ENCODE measurements at regions of chr17 and their contacts with region 1.

Region 1: GRCh38 chr17:74961657-74962490 is 10.7 kb downstream of the HID1 start:
- DNase-seq: peak; percentile 90
- H3K4me3 Mint-ChIP-seq: no peak overlapping the region
- H3K27ac Mint-ChIP-seq: no peak overlapping the region
- H3K4me1 Mint-ChIP-seq: peaks cover 9% of the 10 kb centered on the region
- H3K27me3 Mint-ChIP-seq: no peaks in the 10 kb centered on the region

Region 2: DNA sequence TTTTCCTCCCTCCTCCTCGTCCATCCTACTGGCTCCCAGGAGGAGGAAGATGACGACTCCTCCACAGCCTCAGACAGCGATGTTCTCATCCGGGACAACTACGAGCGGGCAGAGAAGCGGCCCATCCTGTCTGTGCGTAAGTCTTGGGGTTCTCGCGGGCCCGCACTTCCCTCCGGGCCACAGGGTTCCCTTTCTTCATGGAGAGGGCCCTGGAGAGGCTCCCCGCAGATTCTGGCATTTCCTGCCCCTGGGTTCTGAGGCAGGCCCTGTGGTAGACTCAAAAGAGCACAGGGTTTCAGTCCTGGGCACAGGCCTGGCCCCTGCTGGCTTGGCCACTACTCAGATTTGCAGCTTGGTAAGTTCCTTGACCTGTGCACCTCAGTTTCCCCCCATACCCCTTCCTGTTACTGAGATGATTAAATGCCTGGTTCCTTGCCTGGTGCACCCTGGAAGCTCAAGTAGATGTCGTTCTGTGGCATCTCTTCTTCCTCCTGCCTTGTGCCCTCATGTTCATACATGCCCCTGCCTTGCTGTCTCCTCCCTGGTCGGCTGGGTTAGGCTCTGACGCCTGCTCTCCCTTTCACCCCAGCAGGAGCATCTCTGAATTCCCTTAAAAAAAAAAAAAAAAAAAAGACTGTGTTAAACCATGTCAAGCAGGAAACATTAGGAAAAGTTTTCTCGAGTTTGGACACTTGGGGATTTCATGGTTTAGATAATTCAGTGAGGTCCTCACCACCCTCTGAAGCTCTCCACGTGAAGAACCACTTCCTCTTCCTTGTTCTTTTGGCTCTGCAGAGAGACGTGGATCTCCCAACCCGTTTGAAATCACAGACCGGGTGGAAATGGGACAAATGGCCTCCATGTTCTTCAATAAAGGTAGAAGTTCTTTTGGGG is 171.5 kb before region 1 on chr17:
- CTCF ChIA-PET with region 1: interaction called, 16 read pairs
- POLR2A ChIA-PET with region 1: no interaction called
- intact Hi-C with region 1: loop called (anchors 5 kb)
- DNase-seq: no peak
- H3K4me3 Mint-ChIP-seq: no peak overlapping the region
- H3K27ac Mint-ChIP-seq: peak overlapping the region; percentile 57
- H3K4me1 Mint-ChIP-seq: peaks cover 31% of the 10 kb centered on the region
- H3K27me3 Mint-ChIP-seq: no peaks in the 10 kb centered on the region

Region 3: GRCh38 chr17:74815550-74816370 is 146.1 kb before region 1 on chr17:
- CTCF ChIA-PET with region 1: no interaction called
- POLR2A ChIA-PET with region 1: no interaction called
- intact Hi-C with region 1: no loop called
- DNase-seq: no peak
- H3K4me3 Mint-ChIP-seq: no peak overlapping the region
- H3K27ac Mint-ChIP-seq: no peak overlapping the region
- H3K4me1 Mint-ChIP-seq: no peaks in the 10 kb centered on the region
- H3K27me3 Mint-ChIP-seq: no peaks in the 10 kb centered on the region

Region 4: DNA sequence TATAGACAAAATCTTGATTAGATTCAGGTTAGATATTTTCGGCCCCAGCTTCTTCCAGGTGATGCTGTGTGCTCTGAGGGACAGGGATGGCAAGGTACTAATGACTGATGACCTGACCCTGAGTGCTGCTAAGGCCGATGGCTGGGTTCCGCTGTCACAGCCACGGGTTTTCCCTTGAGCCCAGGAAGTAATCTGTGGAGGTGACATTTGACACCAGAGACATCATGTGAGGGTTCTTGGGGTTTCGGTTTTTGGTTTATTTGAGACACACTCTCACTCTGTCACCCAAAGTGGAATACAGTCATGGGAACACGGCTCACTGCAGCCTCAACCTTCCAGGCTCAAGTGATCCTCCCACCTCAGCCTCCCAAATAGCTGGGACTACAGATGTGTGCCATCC is 16.3 kb before region 1 on chr17:
- CTCF ChIA-PET with region 1: interaction called, 14 read pairs
- POLR2A ChIA-PET with region 1: no interaction called
- intact Hi-C with region 1: no loop called
- DNase-seq: no peak
- H3K4me3 Mint-ChIP-seq: no peak overlapping the region
- H3K27ac Mint-ChIP-seq: no peak overlapping the region
- H3K4me1 Mint-ChIP-seq: no peaks in the 10 kb centered on the region
- H3K27me3 Mint-ChIP-seq: peaks cover 8% of the 10 kb centered on the region

Region 5: GRCh38 chr17:74981979-74982662 is 20.2 kb after region 1 on chr17:
- CTCF ChIA-PET with region 1: interaction called, 39 read pairs
- POLR2A ChIA-PET with region 1: interaction called, 4 read pairs
- intact Hi-C with region 1: no loop called
- DNase-seq: peak; percentile 87
- H3K4me3 Mint-ChIP-seq: peak overlapping the region; percentile 77
- H3K27ac Mint-ChIP-seq: peak overlapping the region; percentile 61
- H3K4me1 Mint-ChIP-seq: peaks cover 14% of the 10 kb centered on the region
- H3K27me3 Mint-ChIP-seq: peaks cover 1% of the 10 kb centered on the region

Region 6: GRCh38 chr17:75012346-75013091 is 50.6 kb after region 1 on chr17 and contains the start of gene MRPL58:
- CTCF ChIA-PET with region 1: interaction called, 86 read pairs
- POLR2A ChIA-PET with region 1: interaction called, 3 read pairs
- intact Hi-C with region 1: loop called (anchors 5 kb)
- DNase-seq: peak; percentile 90
- H3K4me3 Mint-ChIP-seq: peak within 1 kb of the TSS; percentile 98
- H3K27ac Mint-ChIP-seq: peak within 1 kb of the TSS; percentile 82
- H3K4me1 Mint-ChIP-seq: peaks cover 31% of the 10 kb centered on the region
- H3K27me3 Mint-ChIP-seq: no peaks in the 10 kb centered on the region
- total RNA-seq, gene MRPL58: 57.7 TPM

Region 7: GRCh38 chr17:75131280-75132017 is 169.6 kb after region 1 on chr17 and contains the start of gene NT5C:
- CTCF ChIA-PET with region 1: interaction called, 14 read pairs
- POLR2A ChIA-PET with region 1: no interaction called
- intact Hi-C with region 1: no loop called
- DNase-seq: peak; percentile 83
- H3K4me3 Mint-ChIP-seq: peak within 1 kb of the TSS; percentile 84
- H3K27ac Mint-ChIP-seq: peak within 1 kb of the TSS; percentile 86
- H3K4me1 Mint-ChIP-seq: peaks cover 18% of the 10 kb centered on the region
- H3K27me3 Mint-ChIP-seq: no peaks in the 10 kb centered on the region
- total RNA-seq, gene NT5C: 65.2 to 70.8 TPM

Region 8: DNA sequence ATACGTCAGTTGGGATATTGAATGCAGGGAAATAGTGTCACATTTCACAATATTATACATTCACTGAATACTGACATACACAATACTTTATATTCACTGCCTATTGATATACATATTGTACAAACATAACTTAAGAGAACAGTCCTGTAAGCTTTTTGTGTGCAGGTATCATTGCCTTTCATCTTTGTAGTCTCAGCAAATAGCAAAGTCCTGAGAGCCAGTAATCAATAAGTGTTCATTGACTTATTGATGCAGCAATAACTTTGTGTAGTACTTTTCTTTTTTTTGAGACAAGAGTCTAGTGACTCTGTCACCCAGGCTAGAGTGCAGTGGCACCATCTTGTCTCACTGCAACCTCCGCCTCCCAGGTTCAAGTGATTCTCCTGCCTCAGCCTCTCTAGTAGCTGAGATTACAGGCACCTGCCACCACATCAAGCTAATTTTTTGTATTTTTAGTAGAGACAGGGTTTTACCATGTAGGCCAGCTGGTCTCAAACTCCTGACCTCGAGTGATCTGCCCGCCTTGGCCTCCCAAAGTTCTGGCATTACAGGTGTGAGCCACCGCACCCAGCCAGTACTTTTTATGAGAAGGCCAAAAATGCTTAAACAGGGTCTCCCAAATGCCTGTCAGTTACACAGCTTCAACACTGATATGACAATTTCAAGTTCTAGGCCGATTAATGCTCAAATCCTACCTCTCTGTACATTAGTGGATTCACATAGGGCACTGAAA is 238.2 kb after region 1 on chr17:
- CTCF ChIA-PET with region 1: interaction called, 60 read pairs
- POLR2A ChIA-PET with region 1: no interaction called
- intact Hi-C with region 1: loop called (anchors 1 kb)
- DNase-seq: no peak
- H3K4me3 Mint-ChIP-seq: no peak overlapping the region
- H3K27ac Mint-ChIP-seq: no peak overlapping the region
- H3K4me1 Mint-ChIP-seq: peaks cover 7% of the 10 kb centered on the region
- H3K27me3 Mint-ChIP-seq: no peaks in the 10 kb centered on the region